Activated CD4-positive, alpha-beta memory T cell treated with anti-CD3 and anti-CD28 coated beads for 36 hours (primary cell): ENCODE measurements at regions of chr4 and their contacts with region 1.

Region 1: GRCh38 chr4:53908661-53909078 is 155.7 kb downstream of the CHIC2 start:
- DNase-seq: no peak
- H3K4me3 Mint-ChIP-seq: no peak overlapping the region
- H3K27ac Mint-ChIP-seq: no peak overlapping the region
- H3K4me1 Mint-ChIP-seq: peaks cover 12% of the 10 kb centered on the region
- H3K27me3 Mint-ChIP-seq: peaks cover 47% of the 10 kb centered on the region

Region 2: GRCh38 chr4:54099748-54100574 is 191.3 kb after region 1 on chr4 and contains the start of gene GSX2:
- CTCF ChIA-PET with region 1: interaction called, 3 read pairs
- POLR2A ChIA-PET with region 1: no interaction called
- intact Hi-C with region 1: loop called (anchors 5 kb)
- DNase-seq: peak; percentile 16
- H3K4me3 Mint-ChIP-seq: peak within 1 kb of the TSS; percentile 52
- H3K27ac Mint-ChIP-seq: no peak within 1 kb of the TSS
- H3K4me1 Mint-ChIP-seq: peaks cover 42% of the 10 kb centered on the region
- H3K27me3 Mint-ChIP-seq: peaks cover 83% of the 10 kb centered on the region
- total RNA-seq, gene GSX2: not detected

Region 3: DNA sequence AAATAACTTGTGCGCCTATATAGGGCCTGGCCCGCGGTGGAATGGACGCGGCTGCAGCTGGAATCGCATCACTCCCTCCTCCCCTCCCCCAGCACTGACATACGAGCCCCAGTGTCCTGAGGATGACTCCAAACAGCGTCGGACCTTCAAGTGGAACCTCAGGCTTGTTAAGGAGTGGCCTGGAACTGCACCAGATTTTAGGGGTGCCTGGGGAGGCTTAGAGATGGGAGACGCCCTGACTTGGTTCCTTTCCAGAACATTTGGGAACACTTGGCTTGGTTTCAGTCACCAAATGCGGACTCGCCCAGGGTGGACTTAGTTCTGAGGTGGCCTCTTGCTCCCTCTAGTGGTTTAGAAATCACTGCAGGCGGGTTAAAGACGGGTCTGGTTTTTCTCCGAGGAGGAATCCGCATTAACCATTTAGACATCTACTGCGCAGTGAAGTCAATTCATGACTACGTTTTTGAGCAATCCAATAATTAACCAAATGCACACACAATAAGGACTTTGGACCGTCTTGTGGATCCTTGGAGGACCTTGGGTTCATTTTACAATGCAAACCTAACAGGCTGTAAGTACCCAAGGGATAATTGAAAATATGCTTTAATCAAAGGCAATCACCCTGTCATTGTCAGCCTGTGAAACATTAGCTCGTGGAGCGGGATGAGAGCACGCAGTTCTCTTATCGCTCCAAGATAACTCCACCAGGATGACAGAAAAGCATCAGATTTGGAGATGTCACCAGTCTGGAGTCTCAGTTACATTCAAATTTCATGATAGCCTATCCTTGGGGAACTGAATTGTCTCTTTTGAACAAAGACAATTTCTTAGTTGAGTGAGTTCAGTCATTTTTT is 309.2 kb after region 1 on chr4:
- CTCF ChIA-PET with region 1: interaction called, 30 read pairs
- POLR2A ChIA-PET with region 1: no interaction called
- intact Hi-C with region 1: loop called (anchors 1 kb)
- DNase-seq: peak; percentile 59
- H3K4me3 Mint-ChIP-seq: no peak overlapping the region
- H3K27ac Mint-ChIP-seq: no peak overlapping the region
- H3K4me1 Mint-ChIP-seq: peaks cover 6% of the 10 kb centered on the region
- H3K27me3 Mint-ChIP-seq: peaks cover 31% of the 10 kb centered on the region